Activated T-helper 1 cell treated with anti-CD3 and anti-CD28 coated beads, Interleukin-12 subunit alpha, Interleukin-12 subunit beta, Interleukin-2, Interleukin-4 antibody, amounts not matched to agents 30 ng/mL and 10 ng/mL and 1 ng/mL, durations not matched to agents 14 hours and 24 hours and 36 hours (primary cell): ENCODE measurements at regions of chr10 and their contacts with region 1.

Region 1: GRCh38 chr10:22003079-22003913 is at the start of gene DNAJC1:
- DNase-seq: peak; percentile 97
- H3K4me3 Mint-ChIP-seq: peak within 1 kb of the TSS; percentile 98
- H3K27ac Mint-ChIP-seq: peak within 1 kb of the TSS; percentile 96
- H3K4me1 Mint-ChIP-seq: peaks cover 41% of the 10 kb centered on the region
- H3K27me3 Mint-ChIP-seq: peaks cover 14% of the 10 kb centered on the region
- total RNA-seq, gene DNAJC1: 24.8 and 26.2 TPM in 2 replicates

Region 2: DNA sequence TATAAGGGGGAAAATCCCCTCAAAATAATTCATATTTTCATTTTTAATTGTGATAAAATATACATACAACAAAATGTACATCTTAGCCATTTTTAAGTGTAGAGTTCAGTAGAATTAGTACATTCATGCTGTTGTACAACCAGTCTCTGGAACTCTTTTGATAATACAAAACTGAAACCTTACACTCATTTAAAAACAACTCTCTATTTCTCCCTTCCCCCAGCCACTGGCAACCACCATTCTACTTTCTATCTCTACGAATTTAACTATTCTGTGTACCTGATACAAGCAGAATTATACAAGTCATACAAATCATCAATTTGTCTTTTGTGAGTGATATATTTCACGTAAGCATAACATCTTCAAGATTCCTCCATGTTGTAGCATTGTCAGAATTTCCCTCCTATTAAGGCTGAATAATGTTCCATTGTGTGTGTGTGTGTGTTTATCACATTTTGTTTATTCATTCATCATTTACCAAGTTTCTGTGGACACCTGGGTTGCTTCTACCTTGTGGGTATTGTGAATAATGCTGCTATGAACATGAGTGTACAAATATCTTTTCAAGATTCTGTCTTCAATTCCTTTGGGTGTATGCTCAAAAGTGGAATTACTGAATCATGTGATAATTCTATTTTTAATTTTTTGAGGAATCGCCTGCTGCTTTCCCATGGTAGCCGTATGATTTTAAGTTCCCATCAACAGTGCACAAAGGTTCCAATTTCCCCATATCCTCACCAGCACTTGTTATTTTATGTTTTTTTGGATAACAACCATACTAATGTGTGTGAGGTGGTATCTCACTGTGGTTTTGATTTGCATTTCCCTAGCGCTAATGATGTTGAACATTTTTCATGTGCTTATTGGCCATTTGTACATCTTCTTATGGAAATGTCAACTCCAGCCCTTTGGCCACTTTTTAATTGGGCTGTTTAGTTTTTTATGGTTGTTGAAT is 219.2 kb after region 1 on chr10:
- intact Hi-C with region 1: loop called (anchors 2 kb)
- DNase-seq: no peak
- H3K4me3 Mint-ChIP-seq: peak overlapping the region; percentile 2
- H3K27ac Mint-ChIP-seq: no peak overlapping the region
- H3K4me1 Mint-ChIP-seq: peaks cover 26% of the 10 kb centered on the region
- H3K27me3 Mint-ChIP-seq: peaks cover 2% of the 10 kb centered on the region

Region 3: GRCh38 chr10:22308390-22308789 is 305.1 kb after region 1 on chr10:
- intact Hi-C with region 1: loop called (anchors 1 kb)
- DNase-seq: peak; percentile 41
- H3K4me3 Mint-ChIP-seq: no peak overlapping the region
- H3K27ac Mint-ChIP-seq: peak overlapping the region; percentile 71
- H3K4me1 Mint-ChIP-seq: peaks cover 29% of the 10 kb centered on the region
- H3K27me3 Mint-ChIP-seq: peaks cover 1% of the 10 kb centered on the region

Region 4: DNA sequence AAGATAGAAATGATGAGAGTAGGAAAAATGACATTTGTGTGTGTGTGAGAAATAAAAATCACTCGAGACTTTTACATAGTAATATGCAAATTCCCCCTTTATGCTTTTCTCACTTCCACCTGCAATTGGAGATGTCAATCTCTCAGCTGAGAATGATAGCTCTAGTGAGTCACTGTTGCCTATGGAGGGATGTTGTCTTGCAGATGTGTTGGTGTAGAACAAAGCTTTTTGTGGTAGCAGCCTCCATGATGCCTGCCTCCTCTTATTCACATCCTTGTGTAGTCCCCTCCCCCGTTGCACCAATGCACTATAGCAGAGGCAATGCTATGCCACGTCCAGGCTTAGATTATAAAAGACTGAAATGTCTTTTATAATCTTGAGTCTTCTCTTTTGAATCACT is 375.8 kb after region 1 on chr10:
- intact Hi-C with region 1: loop called (anchors 1 kb)
- DNase-seq: peak; percentile 7
- H3K4me3 Mint-ChIP-seq: peak overlapping the region; percentile 27
- H3K27ac Mint-ChIP-seq: peak overlapping the region; percentile 81
- H3K4me1 Mint-ChIP-seq: peaks cover 30% of the 10 kb centered on the region
- H3K27me3 Mint-ChIP-seq: peaks cover 3% of the 10 kb centered on the region

Region 5: GRCh38 chr10:22655311-22655981 is 652.1 kb after region 1 on chr10:
- intact Hi-C with region 1: loop called (anchors 2 kb)
- DNase-seq: no peak
- H3K4me3 Mint-ChIP-seq: peak overlapping the region; percentile 72
- H3K27ac Mint-ChIP-seq: peak overlapping the region; percentile 94
- H3K4me1 Mint-ChIP-seq: peaks cover 95% of the 10 kb centered on the region
- H3K27me3 Mint-ChIP-seq: no peaks in the 10 kb centered on the region

Region 6: GRCh38 chr10:23438550-23439441 is 1435.5 kb after region 1 on chr10 and contains the start of gene OTUD1:
- intact Hi-C with region 1: loop called (anchors 10 kb)
- DNase-seq: peak; percentile 94
- H3K4me3 Mint-ChIP-seq: peak within 1 kb of the TSS; percentile 83
- H3K27ac Mint-ChIP-seq: peak within 1 kb of the TSS; percentile 84
- H3K4me1 Mint-ChIP-seq: peaks cover 47% of the 10 kb centered on the region
- H3K27me3 Mint-ChIP-seq: peaks cover 5% of the 10 kb centered on the region
- total RNA-seq, gene OTUD1: 19.1 and 20.3 TPM in 2 replicates